B cell (primary cell): ENCODE measurements at regions of chr5 and their contacts with region 1.

Region 1: GRCh38 chr5:56670118-56670483 is 145.2 kb upstream of the MAP3K1 start:
- DNase-seq: peak; percentile 95
- ATAC-seq: no peak
- H3K4me3 ChIP-seq: no peak overlapping the region
- H3K4me3 Mint-ChIP-seq: peak overlapping the region; percentile 75
- H3K27ac ChIP-seq: peak overlapping the region; percentile 97 to 98
- H3K27ac Mint-ChIP-seq: peak overlapping the region; percentile 97
- H3K4me1 ChIP-seq: peaks cover 58% of the 10 kb centered on the region in 2 donors
- H3K4me1 Mint-ChIP-seq: peaks cover 74% of the 10 kb centered on the region
- H3K27me3 ChIP-seq: no peaks in the 10 kb centered on the region
- H3K27me3 Mint-ChIP-seq: no peaks in the 10 kb centered on the region
- CTCF ChIP-seq: no peak

Region 2: GRCh38 chr5:56565644-56566043 is 104.5 kb before region 1 on chr5:
- CTCF ChIA-PET with region 1: interaction called, 18 read pairs
- POLR2A ChIA-PET with region 1: no interaction called
- intact Hi-C with region 1: loop called (anchors 1 kb)
- DNase-seq: peak; percentile 82
- ATAC-seq: peak; percentile 97
- H3K4me3 ChIP-seq: peak overlapping the region in 3 of 5 experiments; percentile 6 to 20 (median 9)
- H3K4me3 Mint-ChIP-seq: peak overlapping the region; percentile 56
- H3K27ac ChIP-seq: no peak overlapping the region
- H3K27ac Mint-ChIP-seq: peak overlapping the region; percentile 69
- H3K4me1 ChIP-seq: peaks cover 34 to 35% of the 10 kb centered on the region in 2 donors
- H3K4me1 Mint-ChIP-seq: peaks cover 41% of the 10 kb centered on the region
- H3K27me3 ChIP-seq: no peaks in the 10 kb centered on the region
- H3K27me3 Mint-ChIP-seq: no peaks in the 10 kb centered on the region
- CTCF ChIP-seq: no peak

Region 3: GRCh38 chr5:56729488-56729887 is 59.4 kb after region 1 on chr5:
- CTCF ChIA-PET with region 1: interaction called, 3 read pairs
- POLR2A ChIA-PET with region 1: interaction called, 5 read pairs
- intact Hi-C with region 1: loop called (anchors 1 kb)
- DNase-seq: peak; percentile 81
- ATAC-seq: peak; percentile 74
- H3K4me3 ChIP-seq: no peak overlapping the region
- H3K4me3 Mint-ChIP-seq: peak overlapping the region; percentile 36
- H3K27ac ChIP-seq: peak overlapping the region; percentile 74 to 90
- H3K27ac Mint-ChIP-seq: peak overlapping the region; percentile 89
- H3K4me1 ChIP-seq: peaks cover 56 to 57% of the 10 kb centered on the region in 2 donors
- H3K4me1 Mint-ChIP-seq: peaks cover 65% of the 10 kb centered on the region
- H3K27me3 ChIP-seq: no peaks in the 10 kb centered on the region
- H3K27me3 Mint-ChIP-seq: no peaks in the 10 kb centered on the region
- CTCF ChIP-seq: no peak

Region 4: GRCh38 chr5:56755036-56755555 is 85.0 kb after region 1 on chr5:
- CTCF ChIA-PET with region 1: no interaction called
- POLR2A ChIA-PET with region 1: no interaction called
- intact Hi-C with region 1: no loop called
- DNase-seq: no peak
- ATAC-seq: no peak
- H3K4me3 ChIP-seq: no peak overlapping the region
- H3K4me3 Mint-ChIP-seq: no peak overlapping the region
- H3K27ac ChIP-seq: no peak overlapping the region
- H3K27ac Mint-ChIP-seq: no peak overlapping the region
- H3K4me1 ChIP-seq: peaks cover 13 to 17% of the 10 kb centered on the region in 2 donors
- H3K4me1 Mint-ChIP-seq: peaks cover 31% of the 10 kb centered on the region
- H3K27me3 ChIP-seq: no peaks in the 10 kb centered on the region
- H3K27me3 Mint-ChIP-seq: no peaks in the 10 kb centered on the region
- CTCF ChIP-seq: no peak

Region 5: DNA sequence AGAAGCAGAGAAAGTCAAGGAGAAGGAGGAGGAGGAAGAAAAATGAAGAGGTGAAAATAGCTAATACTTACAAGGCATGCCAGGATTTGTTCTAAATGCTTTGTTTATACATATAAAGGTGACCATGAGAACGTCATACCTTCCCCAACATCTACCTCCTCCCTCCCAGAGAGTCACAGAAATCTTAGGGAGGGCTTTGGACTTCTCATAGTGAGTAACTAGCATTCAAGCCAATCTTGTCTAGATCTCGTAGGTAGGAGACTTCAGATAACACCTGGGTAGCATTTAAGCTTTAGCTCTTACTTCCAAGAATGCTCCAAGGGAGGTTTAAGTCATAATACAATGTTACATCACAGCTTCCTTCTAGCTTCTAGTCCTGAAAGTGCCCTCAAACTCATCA is 467.3 kb after region 1 on chr5:
- CTCF ChIA-PET with region 1: no interaction called
- POLR2A ChIA-PET with region 1: no interaction called
- intact Hi-C with region 1: no loop called
- DNase-seq: no peak
- ATAC-seq: no peak
- H3K4me3 ChIP-seq: no peak overlapping the region
- H3K4me3 Mint-ChIP-seq: no peak overlapping the region
- H3K27ac ChIP-seq: no peak overlapping the region
- H3K27ac Mint-ChIP-seq: no peak overlapping the region
- H3K4me1 ChIP-seq: no peaks in the 10 kb centered on the region
- H3K4me1 Mint-ChIP-seq: no peaks in the 10 kb centered on the region
- H3K27me3 ChIP-seq: no peaks in the 10 kb centered on the region
- H3K27me3 Mint-ChIP-seq: peaks cover 12% of the 10 kb centered on the region
- CTCF ChIP-seq: no peak